ENCODE measurements at regions of chr17 and their contacts with region 1.

Region 1: GRCh38 chr17:50963139-50963538 is 97.0 kb upstream of the TOB1 start:
- DNase-seq: no peak
- CTCF ChIP-seq: no peak

Region 2: DNA sequence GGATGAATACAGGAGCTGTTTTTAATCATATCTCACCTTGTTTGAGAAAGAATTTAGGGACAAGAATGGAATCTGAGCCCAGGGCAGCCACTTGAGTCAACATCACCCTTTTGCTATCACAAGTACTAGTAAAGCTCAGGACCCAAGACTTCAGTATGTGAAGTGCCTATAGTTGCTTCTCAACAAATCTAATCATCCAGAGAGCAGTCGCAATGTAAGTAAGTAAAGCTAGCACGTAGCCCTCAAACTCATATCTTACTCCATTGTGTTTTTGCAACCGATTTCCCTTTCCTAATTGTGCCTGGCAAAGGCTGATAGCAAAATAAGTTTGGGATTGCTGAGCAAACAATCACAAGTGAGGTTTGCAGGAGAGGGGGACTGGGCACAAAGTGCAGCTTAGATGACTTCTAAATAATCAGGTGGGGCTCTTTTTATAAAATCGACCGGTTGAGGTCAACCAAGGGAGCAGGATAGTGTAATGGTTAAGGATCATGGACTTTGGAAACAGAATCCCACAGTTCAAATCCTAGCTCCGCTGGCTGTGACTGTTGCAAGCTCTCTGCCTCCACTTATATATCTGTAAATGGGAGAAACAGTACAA is 110.0 kb before region 1 on chr17:
- CTCF ChIA-PET with region 1: interaction called, 228 read pairs
- POLR2A ChIA-PET with region 1: no interaction called
- DNase-seq: no peak
- CTCF ChIP-seq: no peak

Measured in GM10248 (cell line).